A673 (cell line): ENCODE measurements at regions of chr15 and their contacts with region 1.

Region 1: GRCh38 chr15:67501177-67501835 is 19.6 kb upstream of the C15orf61 start:
- DNase-seq: peak; percentile 45
- H3K4me3 ChIP-seq: no peak overlapping the region
- H3K27ac ChIP-seq: no peak overlapping the region
- H3K4me1 ChIP-seq: peaks cover 13% of the 10 kb centered on the region
- H3K27me3 ChIP-seq: no peaks in the 10 kb centered on the region
- CTCF ChIP-seq: peak; percentile 57

Region 2: GRCh38 chr15:67680645-67681044 is 179.3 kb after region 1 on chr15:
- CTCF ChIA-PET with region 1: no interaction called
- POLR2A ChIA-PET with region 1: no interaction called
- intact Hi-C with region 1: no loop called
- DNase-seq: peak; percentile 66
- H3K4me3 ChIP-seq: no peak overlapping the region
- H3K27ac ChIP-seq: peak overlapping the region; percentile 64
- H3K4me1 ChIP-seq: peaks cover 16% of the 10 kb centered on the region
- H3K27me3 ChIP-seq: no peaks in the 10 kb centered on the region
- CTCF ChIP-seq: no peak

Region 3: GRCh38 chr15:67833710-67834511 is 332.6 kb after region 1 on chr15:
- CTCF ChIA-PET with region 1: interaction called, 4 read pairs
- POLR2A ChIA-PET with region 1: no interaction called
- intact Hi-C with region 1: loop called (anchors 5 kb)
- DNase-seq: peak; percentile 71
- H3K4me3 ChIP-seq: peak overlapping the region; percentile 45
- H3K27ac ChIP-seq: no peak overlapping the region
- H3K4me1 ChIP-seq: peaks cover 20% of the 10 kb centered on the region
- H3K27me3 ChIP-seq: peaks cover 72% of the 10 kb centered on the region
- CTCF ChIP-seq: peak; percentile 73